Motor neuron (in vitro differentiated cells): ENCODE measurements at regions of chr12 and their contacts with region 1.

Region 1: GRCh38 chr12:43282106-43282505 is 269.9 kb downstream of the ADAMTS20 start:
- ATAC-seq: peak in 2 of 8 experiments; percentile 25 to 38
- H3K4me3 ChIP-seq: no peak overlapping the region
- H3K27ac ChIP-seq: no peak overlapping the region
- H3K4me1 ChIP-seq: no peaks in the 10 kb centered on the region

Region 2: DNA sequence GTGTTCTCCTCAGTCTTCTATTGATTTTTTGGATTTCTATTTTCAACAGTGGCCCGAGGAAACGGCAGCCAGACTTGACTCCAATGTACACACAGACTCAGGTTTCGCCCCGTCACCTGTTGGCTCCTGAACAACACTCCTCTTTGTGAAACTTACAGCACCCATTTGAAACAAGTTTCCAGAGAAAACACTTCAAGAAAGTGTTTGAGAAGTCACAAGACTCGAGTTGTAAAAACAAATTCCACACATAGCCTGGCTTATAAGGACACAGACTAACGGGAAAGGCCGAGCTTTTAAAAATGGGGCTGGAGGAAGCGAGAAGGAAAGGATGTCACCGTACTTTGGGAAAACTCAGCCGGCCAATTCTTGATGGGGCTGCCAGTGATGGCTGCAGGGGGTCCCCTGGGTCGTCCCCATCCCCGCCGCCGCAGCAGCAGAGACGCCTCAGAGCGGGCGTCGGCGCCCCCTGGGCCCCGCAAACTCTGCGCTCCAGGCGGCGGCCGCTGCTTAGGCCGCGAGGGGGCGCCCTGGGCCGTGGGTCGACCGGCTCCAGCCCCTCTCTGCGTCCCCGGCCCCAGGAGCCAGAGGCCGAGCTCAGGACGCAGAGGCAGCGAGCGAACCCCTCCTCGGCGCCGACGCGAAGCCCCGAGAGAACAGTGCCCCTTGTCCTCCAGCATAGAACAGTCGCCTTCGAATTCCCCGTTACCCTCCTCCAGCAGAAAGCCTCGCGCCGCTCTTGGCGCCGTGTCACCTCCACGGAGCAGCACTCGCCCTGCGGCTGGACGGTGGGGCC is 799.5 kb before region 1 on chr12:
- in situ Hi-C with region 1: loop called in 2 of 9 experiments (anchors 25 kb)
- ATAC-seq: peak; percentile 59 to 83 (median 80)
- H3K4me3 ChIP-seq: peak overlapping the region; percentile 61 to 87 (median 67)
- H3K27ac ChIP-seq: peak overlapping the region in 1 of 2 donors; percentile 65
- H3K4me1 ChIP-seq: peaks cover 2 to 4% of the 10 kb centered on the region in 2 donors

Region 3: GRCh38 chr12:42589465-42590329 is 692.4 kb before region 1 on chr12 and contains the start of gene PRICKLE1:
- in situ Hi-C with region 1: loop called in 3 of 9 experiments (anchors 25 kb)
- ATAC-seq: peak; percentile 68 to 81 (median 73)
- H3K4me3 ChIP-seq: peak within 1 kb of the TSS; percentile 60 to 93 (median 75)
- H3K27ac ChIP-seq: no peak within 1 kb of the TSS
- H3K4me1 ChIP-seq: peaks cover 7 to 12% of the 10 kb centered on the region in 2 donors
- total RNA-seq, gene PRICKLE1: 3.7 to 105 (median 17.2) TPM

Region 4: DNA sequence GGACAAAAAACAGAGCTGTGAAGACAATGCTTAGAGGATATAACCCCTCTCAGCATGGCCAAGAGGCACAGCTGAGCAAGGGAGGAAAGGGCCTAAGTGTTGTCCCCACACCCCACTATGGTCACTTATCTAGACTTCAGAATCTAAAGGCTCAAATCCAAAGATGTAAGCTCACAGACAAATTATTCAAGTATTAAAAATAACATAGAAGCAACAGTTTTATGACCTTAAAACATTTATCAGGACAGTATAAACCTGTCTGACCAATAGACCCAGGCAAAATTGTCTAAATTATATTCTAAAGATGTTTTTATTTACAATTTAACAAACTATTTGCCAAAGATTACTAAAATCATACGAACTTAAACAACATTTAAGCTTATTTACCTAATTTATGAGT is 664.5 kb before region 1 on chr12:
- in situ Hi-C with region 1: loop called in 1 of 9 experiments (anchors 25 kb)
- ATAC-seq: no peak
- H3K4me3 ChIP-seq: no peak overlapping the region
- H3K27ac ChIP-seq: no peak overlapping the region
- H3K4me1 ChIP-seq: no peaks in the 10 kb centered on the region

Region 5: GRCh38 chr12:42809226-42809625 is 472.9 kb before region 1 on chr12:
- in situ Hi-C with region 1: loop called in 1 of 9 experiments (anchors 25 kb)
- ATAC-seq: no peak
- H3K4me3 ChIP-seq: no peak overlapping the region
- H3K27ac ChIP-seq: no peak overlapping the region
- H3K4me1 ChIP-seq: no peaks in the 10 kb centered on the region

Region 6: DNA sequence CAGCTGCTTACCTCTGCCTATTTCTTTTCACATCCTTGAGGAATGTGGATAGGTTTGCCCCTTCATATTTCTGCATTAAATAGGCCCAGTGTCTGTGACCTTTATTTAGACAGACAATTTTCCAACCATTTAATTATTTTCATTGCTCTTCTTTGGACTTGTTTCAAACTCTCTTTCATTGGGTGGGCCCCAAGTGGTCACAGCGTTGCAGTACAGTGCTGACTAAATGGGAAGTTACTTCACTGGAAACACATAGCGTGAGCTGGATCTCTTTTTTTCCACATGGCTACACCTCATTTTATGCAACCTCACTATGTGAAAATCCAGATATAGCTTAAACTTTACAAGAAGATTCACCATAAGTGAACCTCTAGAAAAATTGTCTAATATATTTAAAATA is 169.0 kb before region 1 on chr12:
- in situ Hi-C with region 1: loop called in 1 of 9 experiments (anchors 25 kb)
- ATAC-seq: peak in 1 of 8 experiments; percentile 59
- H3K4me3 ChIP-seq: no peak overlapping the region
- H3K27ac ChIP-seq: no peak overlapping the region
- H3K4me1 ChIP-seq: no peaks in the 10 kb centered on the region